Left cardiac atrium (tissue), 4 donors: ENCODE measurements at regions of chr19 and their contacts with region 1.

Region 1: DNA sequence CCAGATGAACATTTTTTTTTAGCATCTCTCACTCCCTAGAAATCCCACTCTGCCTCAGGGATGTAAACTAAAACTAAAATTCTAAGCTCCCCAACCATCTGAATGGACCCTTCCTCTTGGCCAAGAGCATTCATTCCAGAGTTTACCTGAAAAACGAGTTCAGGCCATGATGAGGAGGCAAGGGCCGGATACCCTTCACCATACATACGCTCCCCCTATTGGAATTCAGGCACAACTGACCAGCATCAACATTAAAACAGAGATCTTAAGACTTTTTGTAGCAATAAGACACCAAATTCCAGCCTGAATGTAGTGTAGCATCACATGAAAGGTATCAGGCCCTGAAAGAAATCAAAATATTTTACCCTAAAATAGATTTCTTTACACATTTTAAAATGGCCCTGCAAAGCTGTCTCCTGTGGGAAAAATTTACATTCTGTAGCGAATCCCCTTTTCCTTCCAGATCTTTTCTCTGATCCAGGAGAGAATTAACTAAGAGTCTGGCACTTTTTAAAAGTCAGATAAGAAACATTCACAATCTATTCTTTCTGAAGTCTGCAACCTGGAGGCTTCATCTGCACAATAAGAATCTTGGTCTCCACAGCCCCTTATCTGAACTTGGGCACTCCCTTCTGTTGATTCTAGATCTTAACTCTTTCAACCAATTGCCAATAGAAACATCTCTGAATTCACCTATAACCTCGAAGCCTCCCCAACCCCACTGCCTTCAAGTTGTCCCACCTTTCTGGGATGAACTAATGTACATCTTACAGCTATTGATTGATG is 888.5 kb downstream of the UQCRFS1 start:
- DNase-seq: no peak
- ATAC-seq: no peak

Region 2: DNA sequence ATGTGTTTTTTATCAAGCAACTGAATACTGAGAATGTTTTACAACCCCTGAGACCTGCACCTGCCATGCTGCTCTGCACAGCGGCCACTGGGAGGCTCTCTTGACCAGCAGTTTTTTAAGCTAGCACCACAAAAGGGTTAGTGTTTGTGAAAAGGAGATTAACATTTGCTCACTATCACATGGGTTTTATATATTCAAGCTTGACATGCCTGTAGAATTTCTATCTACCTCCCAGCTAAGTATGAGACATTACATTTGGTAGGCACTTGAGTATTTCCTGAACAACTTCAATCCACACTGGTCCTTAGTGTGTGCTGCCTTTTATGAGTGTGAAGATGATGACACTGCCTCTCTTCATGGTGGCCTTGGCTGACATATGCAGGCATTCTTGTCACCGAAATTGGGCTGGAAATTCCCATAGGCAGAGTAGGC is 350.4 kb before region 1 on chr19:
- intact Hi-C with region 1: loop called (anchors 2 to 5 kb)
- DNase-seq: peak; percentile 27
- ATAC-seq: peak in 1 of 2 donors; percentile 75